Ovary (tissue), 10 donors: ENCODE measurements at regions of chr6 and their contacts with region 1.

Region 1: DNA sequence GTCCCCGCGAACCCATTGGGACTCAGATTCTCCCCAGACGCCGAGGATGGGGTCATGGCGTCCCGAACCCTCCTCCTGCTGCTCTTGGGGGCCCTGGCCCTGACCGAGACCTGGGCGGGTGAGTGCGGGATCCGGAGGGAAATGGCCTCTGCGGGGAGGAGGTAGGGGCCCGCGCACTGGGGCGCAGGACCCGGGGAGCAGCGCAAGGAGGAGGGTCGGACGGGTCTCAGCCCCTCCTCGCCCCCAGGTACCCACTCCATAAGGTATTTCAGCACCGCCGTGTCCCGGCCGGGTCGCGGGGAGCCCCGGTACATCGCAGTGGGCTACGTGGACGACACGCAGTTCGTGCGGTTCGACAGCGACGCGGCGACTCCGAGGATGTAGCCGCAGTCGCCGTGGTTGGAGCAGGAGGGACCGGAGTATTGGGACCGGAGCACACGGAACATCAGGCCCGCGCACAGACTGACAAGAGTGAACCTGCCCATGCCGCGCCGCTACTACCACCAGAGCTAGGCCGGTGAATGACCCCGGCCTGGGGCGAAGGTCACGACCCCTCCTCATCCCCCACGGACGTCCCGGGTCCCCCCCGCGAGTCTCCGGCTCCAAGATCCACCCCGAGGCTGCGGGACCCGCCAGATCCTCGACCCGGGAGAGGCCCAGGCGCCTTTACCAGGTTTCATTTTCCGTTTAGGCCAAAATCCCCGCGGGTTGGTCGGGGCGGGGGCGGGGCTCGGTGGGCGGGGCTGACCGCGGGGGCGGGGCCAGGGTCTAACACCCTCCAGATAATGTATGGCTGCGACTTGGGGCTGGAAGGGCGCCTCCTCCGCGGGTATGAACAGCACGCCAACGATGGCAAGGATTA is 15.7 kb upstream of the HLA-A start:
- DNase-seq: peak; percentile 75 to 84 (median 83)
- H3K4me3 ChIP-seq: peak overlapping the region; percentile 76
- H3K27ac ChIP-seq: peak overlapping the region in 1 of 2 donors; percentile 98
- H3K4me1 ChIP-seq: no peaks in the 10 kb centered on the region
- H3K27me3 ChIP-seq: no peaks in the 10 kb centered on the region
- CTCF ChIP-seq: peak in 2 of 3 donors; percentile 9 to 21
- EP300 ChIP-seq: no peak
- POLR2A ChIP-seq: peak; percentile 49

Region 2: GRCh38 chr6:28141500-28142329 is 1784.9 kb before region 1 on chr6 and contains the start of gene ZKSCAN8:
- intact Hi-C with region 1: no loop called
- DNase-seq: peak; percentile 73 to 82 (median 76)
- H3K4me3 ChIP-seq: peak within 1 kb of the TSS; percentile 81
- H3K27ac ChIP-seq: peak within 1 kb of the TSS in 1 of 2 donors; percentile 74
- H3K4me1 ChIP-seq: peaks cover 7% of the 10 kb centered on the region
- H3K27me3 ChIP-seq: no peaks in the 10 kb centered on the region
- CTCF ChIP-seq: no peak
- EP300 ChIP-seq: no peak
- POLR2A ChIP-seq: peak; percentile 36
- total RNA-seq, gene ZKSCAN8: 16.8 to 44.6 (median 31.9) TPM

Region 3: DNA sequence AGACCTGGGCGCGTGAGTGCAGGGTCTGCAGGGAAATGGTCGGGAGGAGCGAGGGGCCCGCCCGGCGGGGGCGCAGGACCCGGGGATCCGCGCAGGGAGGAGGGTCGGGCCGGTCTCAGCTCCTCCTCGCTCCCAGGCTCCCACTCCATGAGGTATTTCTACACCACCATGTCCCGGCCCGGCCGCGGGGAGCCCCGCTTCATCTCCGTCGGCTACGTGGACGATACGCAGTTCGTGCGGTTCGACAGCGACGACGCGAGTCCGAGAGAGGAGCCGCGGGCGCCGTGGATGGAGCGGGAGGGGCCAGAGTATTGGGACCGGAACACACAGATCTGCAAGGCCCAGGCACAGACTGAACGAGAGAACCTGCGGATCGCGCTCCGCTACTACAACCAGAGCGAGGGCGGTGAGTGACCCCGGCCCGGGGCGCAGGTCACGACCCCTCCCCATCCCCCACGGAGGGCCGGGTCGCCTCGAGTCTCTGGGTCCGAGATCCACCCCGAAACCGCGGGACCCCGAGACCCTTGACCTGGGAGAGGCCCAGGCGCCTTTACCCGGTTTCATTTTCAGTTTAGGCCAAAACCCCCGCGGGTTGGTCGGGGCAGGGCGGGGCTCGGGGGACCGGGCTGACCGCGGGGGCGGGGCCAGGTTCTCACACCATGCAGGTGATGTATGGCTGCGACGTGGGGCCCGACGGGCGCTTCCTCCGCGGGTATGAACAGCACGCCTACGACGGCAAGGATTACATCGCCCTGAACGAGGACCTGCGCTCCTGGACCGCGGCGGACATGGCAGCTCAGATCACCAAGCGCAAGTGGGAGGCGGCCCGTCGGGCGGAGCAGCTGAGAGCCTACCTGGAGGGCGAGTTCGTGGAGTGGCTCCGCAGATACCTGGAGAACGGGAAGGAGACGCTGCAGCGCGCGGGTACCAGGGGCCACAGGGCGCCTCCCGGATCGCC is 38.5 kb before region 1 on chr6:
- intact Hi-C with region 1: loop called in 1 of 4 experiments (anchors 5 kb)
- DNase-seq: peak; percentile 85 to 87 (median 86)
- H3K4me3 ChIP-seq: peak overlapping the region; percentile 83
- H3K27ac ChIP-seq: peak overlapping the region in 1 of 2 donors; percentile 99
- H3K4me1 ChIP-seq: peaks cover 2% of the 10 kb centered on the region
- H3K27me3 ChIP-seq: no peaks in the 10 kb centered on the region
- CTCF ChIP-seq: peak in 1 of 3 donors; percentile 15
- EP300 ChIP-seq: no peak
- POLR2A ChIP-seq: peak; percentile 26

Region 4: DNA sequence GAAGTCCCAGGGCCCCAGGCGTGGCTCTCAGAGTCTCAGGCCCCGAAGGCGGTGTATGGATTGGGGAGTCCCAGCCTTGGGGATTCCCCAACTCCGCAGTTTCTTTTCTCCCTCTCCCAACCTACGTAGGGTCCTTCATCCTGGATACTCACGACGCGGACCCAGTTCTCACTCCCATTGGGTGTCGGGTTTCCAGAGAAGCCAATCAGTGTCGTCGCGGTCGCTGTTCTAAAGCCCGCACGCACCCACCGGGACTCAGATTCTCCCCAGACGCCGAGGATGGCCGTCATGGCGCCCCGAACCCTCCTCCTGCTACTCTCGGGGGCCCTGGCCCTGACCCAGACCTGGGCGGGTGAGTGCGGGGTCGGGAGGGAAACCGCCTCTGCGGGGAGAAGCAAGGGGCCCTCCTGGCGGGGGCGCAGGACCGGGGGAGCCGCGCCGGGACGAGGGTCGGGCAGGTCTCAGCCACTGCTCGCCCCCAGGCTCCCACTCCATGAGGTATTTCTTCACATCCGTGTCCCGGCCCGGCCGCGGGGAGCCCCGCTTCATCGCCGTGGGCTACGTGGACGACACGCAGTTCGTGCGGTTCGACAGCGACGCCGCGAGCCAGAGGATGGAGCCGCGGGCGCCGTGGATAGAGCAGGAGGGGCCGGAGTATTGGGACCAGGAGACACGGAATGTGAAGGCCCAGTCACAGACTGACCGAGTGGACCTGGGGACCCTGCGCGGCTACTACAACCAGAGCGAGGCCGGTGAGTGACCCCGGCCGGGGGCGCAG is 15.8 kb after region 1 on chr6 and contains the start of gene HLA-A:
- intact Hi-C with region 1: loop called in 1 of 4 experiments (anchors 1 kb)
- DNase-seq: peak; percentile 91 to 96 (median 92)
- H3K4me3 ChIP-seq: peak within 1 kb of the TSS; percentile 73
- H3K27ac ChIP-seq: peak within 1 kb of the TSS; percentile 57 to 62
- H3K4me1 ChIP-seq: peaks cover 5% of the 10 kb centered on the region
- H3K27me3 ChIP-seq: no peaks in the 10 kb centered on the region
- CTCF ChIP-seq: no peak
- EP300 ChIP-seq: no peak
- POLR2A ChIP-seq: peak; percentile 95
- total RNA-seq, gene HLA-A: 269 to 430 (median 310) TPM

Region 5: DNA sequence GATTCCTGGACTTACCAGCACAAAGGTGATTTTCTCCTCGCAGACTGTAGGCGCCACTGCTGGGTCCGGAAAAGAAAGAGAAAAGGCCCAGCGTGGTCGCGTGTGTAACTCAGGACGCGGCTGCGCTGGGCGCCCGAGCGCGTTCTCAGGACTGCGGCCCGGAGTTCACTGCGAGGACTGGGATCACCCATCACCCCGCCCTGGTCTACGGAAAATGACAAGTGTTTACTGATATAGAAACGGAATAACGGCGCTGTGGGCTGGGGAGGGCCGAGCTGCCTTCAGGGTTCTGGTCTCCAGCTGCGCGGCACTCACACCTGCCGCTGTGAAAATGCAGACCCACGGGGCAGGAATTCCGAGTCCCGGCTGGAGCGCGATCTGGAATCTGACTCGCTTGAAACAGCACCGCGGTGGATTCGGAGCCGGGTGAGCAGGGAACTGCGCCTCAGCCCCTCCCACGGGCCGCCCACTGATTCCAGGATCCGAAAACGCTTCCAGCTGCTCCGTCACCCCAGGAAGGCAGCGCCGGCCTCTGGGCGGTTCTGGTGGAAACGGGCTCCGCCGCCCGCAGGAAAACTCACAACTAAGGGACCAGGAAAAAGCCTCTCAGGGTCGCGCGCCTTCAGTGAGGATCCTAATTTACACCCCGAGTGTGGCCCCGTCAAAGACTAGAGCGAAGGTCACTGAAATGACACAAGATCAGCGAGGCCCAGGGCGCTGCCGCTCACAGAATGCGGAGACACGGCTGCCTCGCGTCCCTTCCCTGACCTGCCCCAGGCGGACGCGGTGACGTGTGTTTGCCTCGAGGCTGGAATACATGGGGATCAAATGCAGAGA is 50.2 kb after region 1 on chr6:
- intact Hi-C with region 1: loop called in 1 of 4 experiments (anchors 5 kb)
- DNase-seq: peak; percentile 83 to 88 (median 85)
- H3K4me3 ChIP-seq: peak overlapping the region; percentile 43
- H3K27ac ChIP-seq: peak overlapping the region; percentile 66 to 95
- H3K4me1 ChIP-seq: peaks cover 6% of the 10 kb centered on the region
- H3K27me3 ChIP-seq: no peaks in the 10 kb centered on the region
- CTCF ChIP-seq: peak in 1 of 3 donors; percentile 44
- EP300 ChIP-seq: no peak
- POLR2A ChIP-seq: peak; percentile 51